Activated CD8-positive, alpha-beta T cell treated with anti-CD3 and anti-CD28 coated beads for 36 hours (primary cell): ENCODE measurements at regions of chr2 and their contacts with region 1.

Region 1: GRCh38 chr2:64653349-64654062 is at the start of gene SERTAD2:
- DNase-seq: peak; percentile 87
- ATAC-seq: peak; percentile 80
- H3K4me3 Mint-ChIP-seq: peak within 1 kb of the TSS; percentile 91
- H3K27ac Mint-ChIP-seq: peak within 1 kb of the TSS; percentile 90
- H3K4me1 Mint-ChIP-seq: peaks cover 74% of the 10 kb centered on the region
- H3K27me3 Mint-ChIP-seq: no peaks in the 10 kb centered on the region
- CTCF ChIP-seq: no peak
- total RNA-seq, gene SERTAD2: 31.2 to 33.9 TPM

Region 2: DNA sequence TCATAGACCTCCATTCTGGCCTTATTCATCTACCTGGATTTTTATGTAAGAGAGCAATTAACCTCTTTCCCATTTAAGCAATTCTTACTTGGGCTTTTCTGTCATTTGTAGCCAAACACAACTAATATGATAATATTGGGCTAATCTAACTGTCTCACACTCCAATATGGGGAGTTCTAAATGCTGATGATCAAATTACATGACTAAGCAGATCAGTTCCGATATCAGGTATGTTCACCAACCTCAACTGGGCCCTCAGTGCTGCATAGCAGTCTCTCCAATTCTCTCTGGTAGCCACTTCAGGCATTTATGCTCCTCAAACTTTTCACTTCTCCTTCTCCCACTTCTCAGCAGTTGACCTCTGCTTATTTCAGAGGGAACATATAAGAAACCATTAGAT is 573.3 kb before region 1 on chr2:
- CTCF ChIA-PET with region 1: no interaction called
- POLR2A ChIA-PET with region 1: no interaction called
- intact Hi-C with region 1: no loop called
- DNase-seq: no peak
- ATAC-seq: no peak
- H3K4me3 Mint-ChIP-seq: no peak overlapping the region
- H3K27ac Mint-ChIP-seq: no peak overlapping the region
- H3K4me1 Mint-ChIP-seq: no peaks in the 10 kb centered on the region
- H3K27me3 Mint-ChIP-seq: peaks cover 2% of the 10 kb centered on the region
- CTCF ChIP-seq: no peak

Region 3: DNA sequence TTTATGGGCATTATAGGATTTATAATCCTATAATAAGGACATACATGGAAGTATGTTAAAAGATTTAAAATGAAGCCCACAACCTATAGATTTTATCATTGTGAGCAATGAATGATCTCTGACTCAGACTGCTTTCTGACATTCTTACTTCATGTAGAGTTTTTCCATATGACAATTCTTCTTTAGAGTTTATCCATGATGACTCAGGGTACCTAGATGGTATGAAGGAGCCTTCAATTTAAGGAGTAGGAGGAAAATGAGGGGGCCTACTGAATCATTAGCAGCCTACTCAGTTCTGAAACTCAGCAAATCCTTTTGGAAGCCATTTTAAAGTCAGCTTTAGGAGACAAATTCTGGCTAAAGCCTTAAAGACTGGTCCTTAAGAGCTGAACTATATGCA is 519.7 kb before region 1 on chr2:
- CTCF ChIA-PET with region 1: no interaction called
- POLR2A ChIA-PET with region 1: no interaction called
- intact Hi-C with region 1: loop called (anchors 10 kb)
- DNase-seq: no peak
- ATAC-seq: peak; percentile 66
- H3K4me3 Mint-ChIP-seq: no peak overlapping the region
- H3K27ac Mint-ChIP-seq: peak overlapping the region; percentile 88
- H3K4me1 Mint-ChIP-seq: peaks cover 82% of the 10 kb centered on the region
- H3K27me3 Mint-ChIP-seq: no peaks in the 10 kb centered on the region
- CTCF ChIP-seq: no peak

Region 4: GRCh38 chr2:64371727-64372126 is 281.8 kb before region 1 on chr2:
- CTCF ChIA-PET with region 1: no interaction called
- POLR2A ChIA-PET with region 1: no interaction called
- intact Hi-C with region 1: no loop called
- DNase-seq: no peak
- ATAC-seq: no peak
- H3K4me3 Mint-ChIP-seq: no peak overlapping the region
- H3K27ac Mint-ChIP-seq: no peak overlapping the region
- H3K4me1 Mint-ChIP-seq: no peaks in the 10 kb centered on the region
- H3K27me3 Mint-ChIP-seq: no peaks in the 10 kb centered on the region
- CTCF ChIP-seq: no peak

Region 5: DNA sequence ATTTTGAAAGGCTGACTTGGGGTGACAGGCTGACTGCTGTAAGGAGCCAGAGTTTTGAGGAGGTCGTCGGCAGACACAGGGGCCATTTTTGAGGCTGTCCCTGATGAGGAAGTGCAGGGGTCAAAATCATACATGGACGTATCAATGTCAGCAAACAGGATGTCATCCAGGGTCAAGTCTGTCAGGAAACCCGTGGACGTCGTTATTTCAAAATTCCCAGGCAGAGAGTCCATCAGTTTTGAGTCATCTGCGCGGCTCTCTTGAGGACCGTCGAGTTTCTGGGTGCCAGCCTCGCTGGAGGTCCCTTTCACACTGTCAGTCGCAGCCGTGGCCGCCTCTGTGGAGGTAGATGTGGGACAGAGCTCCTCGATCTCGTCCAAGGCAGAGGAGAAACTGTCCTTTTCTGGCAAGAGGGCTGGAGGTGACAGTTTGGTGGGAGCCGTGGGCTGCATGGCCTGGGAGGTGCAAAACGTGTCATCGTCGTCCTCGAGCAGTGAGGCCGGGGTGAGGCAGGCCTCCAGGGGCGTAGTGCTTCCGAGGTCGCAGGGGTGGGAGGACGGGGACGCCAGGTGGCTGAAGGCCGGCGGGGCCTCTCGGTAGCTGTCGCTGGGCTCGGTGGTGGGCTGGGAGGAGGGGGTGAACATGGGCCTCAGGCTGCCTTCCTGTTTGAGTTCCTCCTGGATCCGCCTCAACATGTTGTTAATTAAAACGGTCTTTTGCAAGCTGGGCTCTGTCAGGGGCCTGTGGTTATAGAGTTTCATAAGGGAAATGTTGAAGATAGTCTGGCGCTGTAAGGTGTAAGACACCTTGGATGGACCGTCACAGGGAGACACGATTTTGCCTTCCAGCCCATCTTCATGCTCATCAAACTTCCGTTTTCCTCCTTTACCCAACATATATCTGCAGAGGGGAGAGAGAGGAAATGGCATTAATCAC is 17.3 kb before region 1 on chr2:
- CTCF ChIA-PET with region 1: interaction called, 28 read pairs
- POLR2A ChIA-PET with region 1: interaction called, 20 read pairs
- intact Hi-C with region 1: no loop called
- DNase-seq: peak; percentile 40
- ATAC-seq: peak; percentile 67
- H3K4me3 Mint-ChIP-seq: peak overlapping the region; percentile 60
- H3K27ac Mint-ChIP-seq: peak overlapping the region; percentile 86
- H3K4me1 Mint-ChIP-seq: peaks cover 58% of the 10 kb centered on the region
- H3K27me3 Mint-ChIP-seq: no peaks in the 10 kb centered on the region
- CTCF ChIP-seq: no peak

Region 6: DNA sequence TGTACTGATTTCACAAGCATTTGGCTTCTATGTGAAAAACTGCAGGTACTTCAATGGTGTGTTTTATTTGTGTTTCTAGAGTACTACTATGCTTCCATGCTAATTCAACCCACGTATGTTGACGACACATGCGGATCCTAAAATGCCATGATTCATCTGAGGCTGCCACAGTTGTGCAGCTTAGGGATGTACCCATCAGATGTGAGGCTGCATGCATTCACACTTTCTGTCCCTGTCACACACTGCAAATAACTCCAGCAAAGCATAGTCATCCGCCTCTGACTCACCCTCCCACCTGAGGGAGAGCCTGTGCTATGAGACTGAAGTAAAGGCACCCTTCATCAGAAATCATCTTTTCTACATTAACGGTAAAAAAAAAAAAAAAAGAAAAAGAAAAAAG is 22.4 kb after region 1 on chr2:
- CTCF ChIA-PET with region 1: interaction called, 40 read pairs
- POLR2A ChIA-PET with region 1: interaction called, 19 read pairs
- intact Hi-C with region 1: no loop called
- DNase-seq: peak; percentile 92
- ATAC-seq: peak; percentile 98
- H3K4me3 Mint-ChIP-seq: no peak overlapping the region
- H3K27ac Mint-ChIP-seq: peak overlapping the region; percentile 64
- H3K4me1 Mint-ChIP-seq: peaks cover 63% of the 10 kb centered on the region
- H3K27me3 Mint-ChIP-seq: no peaks in the 10 kb centered on the region
- CTCF ChIP-seq: no peak

Region 7: DNA sequence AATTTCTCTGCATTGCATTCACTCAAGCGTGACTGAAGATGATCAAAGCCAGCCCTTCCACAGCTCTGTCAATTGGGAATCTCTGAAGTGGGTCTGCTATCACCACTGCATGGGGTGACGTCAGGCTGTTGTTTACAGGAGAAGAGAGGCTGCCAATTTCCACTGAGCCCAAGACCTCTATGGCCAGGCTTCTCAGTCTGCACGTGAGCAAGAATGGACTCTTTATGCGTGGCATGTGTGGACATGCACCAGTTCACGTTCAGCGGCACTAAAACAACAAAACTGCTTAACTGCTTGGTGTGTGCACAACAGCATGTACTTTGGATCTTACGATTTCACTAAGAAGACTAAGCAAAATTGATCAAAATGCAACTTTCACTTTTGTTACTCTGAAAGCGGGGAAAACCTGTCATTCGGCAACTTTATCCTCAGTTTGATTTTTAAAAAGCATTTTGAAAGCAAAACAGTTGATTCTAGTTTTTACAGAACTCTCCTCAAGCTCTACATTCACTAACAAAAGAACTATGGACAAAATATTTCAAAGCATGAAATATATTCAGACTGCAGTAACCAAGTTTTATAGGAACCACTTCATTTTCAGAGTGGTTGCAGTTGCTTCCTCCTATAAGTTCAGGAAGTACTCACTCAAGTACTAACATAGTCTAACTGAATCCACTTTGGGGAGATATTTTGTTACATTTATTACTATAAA is 77.2 kb after region 1 on chr2:
- CTCF ChIA-PET with region 1: interaction called, 12 read pairs
- POLR2A ChIA-PET with region 1: interaction called, 40 read pairs
- intact Hi-C with region 1: loop called (anchors 5 kb)
- DNase-seq: peak; percentile 58
- ATAC-seq: peak; percentile 51
- H3K4me3 Mint-ChIP-seq: peak overlapping the region; percentile 83
- H3K27ac Mint-ChIP-seq: peak overlapping the region; percentile 96
- H3K4me1 Mint-ChIP-seq: peaks cover 67% of the 10 kb centered on the region
- H3K27me3 Mint-ChIP-seq: no peaks in the 10 kb centered on the region
- CTCF ChIP-seq: no peak

Region 8: GRCh38 chr2:64750817-64751285 is 97.3 kb after region 1 on chr2:
- CTCF ChIA-PET with region 1: interaction called, 9 read pairs
- POLR2A ChIA-PET with region 1: interaction called, 44 read pairs
- intact Hi-C with region 1: loop called (anchors 5 kb)
- DNase-seq: peak; percentile 99
- ATAC-seq: peak; percentile 86
- H3K4me3 Mint-ChIP-seq: peak overlapping the region; percentile 93
- H3K27ac Mint-ChIP-seq: peak overlapping the region; percentile 97
- H3K4me1 Mint-ChIP-seq: peaks cover 29% of the 10 kb centered on the region
- H3K27me3 Mint-ChIP-seq: no peaks in the 10 kb centered on the region
- CTCF ChIP-seq: no peak

Region 9: DNA sequence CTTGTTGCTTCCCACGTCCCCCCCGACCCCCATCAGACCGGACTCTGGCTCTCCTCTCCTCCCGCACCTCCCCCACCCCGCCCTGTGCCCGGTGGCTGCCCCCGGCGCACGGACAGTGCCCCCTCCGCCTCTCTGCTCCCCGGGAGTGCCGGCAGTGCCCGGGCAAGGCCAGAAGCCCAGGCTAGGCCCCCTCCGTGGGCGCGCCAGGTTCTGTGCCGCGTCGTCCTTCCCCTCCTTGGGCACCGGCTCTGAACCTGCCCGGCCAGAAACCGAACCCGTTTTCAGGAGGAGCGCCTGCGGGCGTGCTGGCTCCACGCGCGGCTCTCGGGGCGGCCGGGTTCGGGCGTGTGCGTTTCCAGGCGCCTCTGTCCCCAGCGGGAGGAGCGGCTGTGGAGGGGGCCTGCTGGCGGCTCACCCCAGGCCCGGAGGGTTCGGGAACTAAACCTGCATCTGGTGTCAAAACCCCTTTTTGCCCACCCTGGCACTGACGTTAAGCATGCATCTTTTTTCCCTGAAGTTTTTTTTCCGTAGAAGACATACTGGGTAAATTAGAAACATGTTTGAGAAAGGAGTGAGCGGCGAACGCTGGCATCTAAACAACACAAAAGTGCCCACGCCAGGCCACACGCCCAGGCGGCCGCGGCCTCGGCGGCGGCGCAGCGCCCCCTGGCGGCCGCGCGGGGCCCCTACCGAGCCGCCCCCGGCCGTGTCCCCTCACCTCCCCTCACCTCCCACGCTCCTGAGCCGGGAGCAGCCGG is 211.7 kb after region 1 on chr2:
- CTCF ChIA-PET with region 1: interaction called, 16 read pairs
- POLR2A ChIA-PET with region 1: interaction called, 4 read pairs
- intact Hi-C with region 1: loop called (anchors 5 kb)
- DNase-seq: peak; percentile 72
- ATAC-seq: peak; percentile 68
- H3K4me3 Mint-ChIP-seq: peak overlapping the region; percentile 68
- H3K27ac Mint-ChIP-seq: peak overlapping the region; percentile 35
- H3K4me1 Mint-ChIP-seq: peaks cover 3% of the 10 kb centered on the region
- H3K27me3 Mint-ChIP-seq: peaks cover 6% of the 10 kb centered on the region
- CTCF ChIP-seq: peak; percentile 94